ENCODE measurements at regions of chr5 and their contacts with region 1.

Region 1: DNA sequence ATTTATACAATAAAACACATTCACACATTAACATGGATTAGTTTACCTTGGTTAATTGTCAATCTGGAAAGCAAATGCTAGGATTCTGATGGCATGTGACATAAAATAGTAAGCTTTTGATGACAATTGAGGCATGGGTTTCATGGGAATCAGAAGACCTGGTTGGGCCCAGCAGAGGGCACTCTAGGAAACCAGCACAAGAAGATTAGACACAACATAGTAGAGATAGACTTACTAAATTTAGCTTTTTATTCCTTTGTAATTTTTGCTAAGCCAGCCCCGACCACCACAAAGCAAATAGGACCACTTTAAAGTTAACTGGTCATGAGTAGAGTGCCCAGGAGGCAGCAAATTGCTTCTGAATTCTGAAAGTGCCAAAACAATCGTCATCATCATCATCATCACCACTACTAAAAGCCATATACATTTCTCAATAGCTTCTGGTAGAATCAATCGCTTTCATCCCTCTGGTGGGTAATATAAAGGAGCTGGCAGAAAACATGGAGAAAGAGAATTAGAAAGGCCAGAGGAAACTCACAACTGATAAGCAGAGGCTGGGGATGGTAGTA is 163.2 kb downstream of the ARRDC3 start:
- DNase-seq: peak; percentile 44
- ATAC-seq: peak; percentile 60
- H3K4me3 Mint-ChIP-seq: no peak overlapping the region
- H3K27ac Mint-ChIP-seq: no peak overlapping the region
- H3K4me1 Mint-ChIP-seq: no peaks in the 10 kb centered on the region
- H3K27me3 Mint-ChIP-seq: peaks cover 9% of the 10 kb centered on the region

Region 2: GRCh38 chr5:91373600-91373999 is 153.7 kb after region 1 on chr5:
- CTCF ChIA-PET with region 1: interaction called, 11 read pairs
- DNase-seq: no peak
- ATAC-seq: no peak
- H3K4me3 Mint-ChIP-seq: no peak overlapping the region
- H3K27ac Mint-ChIP-seq: no peak overlapping the region
- H3K4me1 Mint-ChIP-seq: peaks cover 36% of the 10 kb centered on the region
- H3K27me3 Mint-ChIP-seq: no peaks in the 10 kb centered on the region